ENCODE measurements at regions of chr10 and their contacts with region 1.

Region 1: DNA sequence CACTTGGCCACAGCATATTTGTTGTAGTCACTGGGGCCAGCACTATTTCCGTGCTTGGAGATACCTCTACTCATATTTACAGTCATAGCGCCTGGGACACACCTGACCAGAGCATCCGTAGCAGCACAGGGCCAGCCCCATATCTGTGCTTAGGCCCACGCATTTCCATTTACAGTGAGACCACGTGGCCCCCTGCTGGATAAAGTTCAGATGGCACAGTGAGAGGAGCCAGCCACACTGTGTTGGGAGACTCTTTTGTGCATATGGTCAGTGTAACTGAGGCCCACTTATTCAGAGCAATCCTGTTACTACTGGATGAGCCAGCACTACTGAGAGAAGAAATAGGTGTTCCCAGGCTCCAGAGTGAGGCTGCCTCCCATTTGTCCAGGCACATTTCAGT is 455.3 kb downstream of the REEP3 start:
- DNase-seq: peak; percentile 62
- H3K4me3 ChIP-seq: no peak overlapping the region
- H3K27ac ChIP-seq: no peak overlapping the region
- H3K4me1 ChIP-seq: no peaks in the 10 kb centered on the region
- H3K27me3 ChIP-seq: no peaks in the 10 kb centered on the region
- CTCF ChIP-seq: peak; percentile 71

Region 2: DNA sequence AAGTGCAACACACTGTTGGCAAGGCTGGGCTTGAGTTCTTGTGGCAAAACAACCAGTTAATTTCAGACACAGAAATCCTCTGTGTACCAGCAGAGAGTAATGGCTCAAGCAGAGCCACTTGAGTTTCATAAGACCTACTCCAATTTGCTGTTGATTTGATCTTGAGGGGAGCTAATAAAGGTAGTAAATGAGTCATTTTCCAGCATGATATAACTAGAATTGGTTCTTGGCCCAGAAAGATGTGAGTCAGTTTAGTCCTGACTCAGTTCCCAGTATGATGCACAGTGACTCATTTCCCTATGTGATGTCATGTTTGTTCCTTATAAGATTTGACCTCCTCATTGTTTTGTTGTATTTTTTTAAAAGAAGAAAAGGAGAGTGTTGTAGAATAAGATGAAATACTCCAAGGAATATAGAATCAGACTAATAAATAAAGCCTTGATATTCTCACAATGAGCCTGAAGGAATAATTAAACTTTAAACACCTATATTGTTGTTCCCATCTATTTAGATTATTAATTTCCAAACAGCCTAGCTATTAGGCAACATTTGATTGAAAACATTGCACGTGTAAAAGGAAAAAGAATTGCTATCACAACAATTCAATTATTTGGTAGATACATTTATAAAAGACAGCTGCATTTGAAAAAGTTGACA is 269.2 kb before region 1 on chr10:
- CTCF ChIA-PET with region 1: no interaction called
- POLR2A ChIA-PET with region 1: no interaction called
- intact Hi-C with region 1: no loop called
- DNase-seq: peak; percentile 93
- H3K4me3 ChIP-seq: no peak overlapping the region
- H3K27ac ChIP-seq: no peak overlapping the region
- H3K4me1 ChIP-seq: peaks cover 47% of the 10 kb centered on the region
- H3K27me3 ChIP-seq: no peaks in the 10 kb centered on the region
- CTCF ChIP-seq: no peak

Region 3: GRCh38 chr10:63866075-63866746 is 110.3 kb before region 1 on chr10:
- CTCF ChIA-PET with region 1: interaction called, 15 read pairs
- POLR2A ChIA-PET with region 1: no interaction called
- intact Hi-C with region 1: loop called (anchors 2 kb)
- DNase-seq: peak; percentile 89
- H3K4me3 ChIP-seq: peak overlapping the region; percentile 18
- H3K27ac ChIP-seq: no peak overlapping the region
- H3K4me1 ChIP-seq: peaks cover 5% of the 10 kb centered on the region
- H3K27me3 ChIP-seq: peaks cover 10% of the 10 kb centered on the region
- CTCF ChIP-seq: peak; percentile 87